PC-9 (cell line): ENCODE measurements at regions of chr7 and their contacts with region 1.

Region 1: GRCh38 chr7:82699773-82700186 is 256.2 kb upstream of the CACNA2D1 start:
- DNase-seq: peak; percentile 69 to 89
- H3K4me3 ChIP-seq: no peak overlapping the region
- H3K27ac ChIP-seq: peak overlapping the region; percentile 28; the same call in 1 of the 2 replicates
- H3K4me1 ChIP-seq: peaks cover 21% of the 10 kb centered on the region
- H3K27me3 ChIP-seq: no peaks in the 10 kb centered on the region
- CTCF ChIP-seq: no peak

Region 2: DNA sequence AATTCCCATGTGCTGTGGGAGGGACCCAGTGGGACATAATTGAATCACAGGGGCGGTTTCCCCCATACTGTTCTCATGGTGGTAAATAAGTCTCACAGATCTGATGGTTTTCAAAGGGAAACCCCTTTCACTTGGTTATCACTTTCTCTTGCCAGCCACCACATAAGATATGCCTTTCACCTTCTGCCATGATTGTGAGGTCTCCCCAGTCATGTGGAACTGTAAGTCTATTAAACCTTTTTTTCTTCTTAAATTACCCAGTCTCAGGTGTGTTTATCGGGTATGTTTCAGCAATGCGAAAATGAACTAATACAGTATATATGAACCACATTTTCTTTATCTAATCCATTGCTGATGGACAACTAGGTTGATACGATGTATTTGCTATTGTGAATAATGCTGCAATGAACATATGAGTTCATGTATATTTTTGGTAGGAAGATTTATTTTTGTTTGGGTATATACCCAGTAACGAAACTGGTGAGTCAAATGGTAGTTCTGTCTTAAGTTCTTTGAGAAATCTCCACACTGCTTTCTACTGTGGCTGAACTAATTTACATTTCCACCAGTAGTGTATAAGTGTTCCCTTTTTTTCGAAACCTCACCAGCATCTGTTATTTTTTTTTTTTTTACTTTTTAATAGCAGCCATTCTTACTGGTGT is 859.9 kb before region 1 on chr7:
- CTCF ChIA-PET with region 1: no interaction called
- POLR2A ChIA-PET with region 1: interaction called, 27 read pairs
- intact Hi-C with region 1: no loop called
- DNase-seq: no peak
- H3K4me3 ChIP-seq: no peak overlapping the region
- H3K27ac ChIP-seq: no peak overlapping the region
- H3K4me1 ChIP-seq: no peaks in the 10 kb centered on the region
- H3K27me3 ChIP-seq: no peaks in the 10 kb centered on the region
- CTCF ChIP-seq: no peak

Region 3: GRCh38 chr7:82388138-82388537 is 311.6 kb before region 1 on chr7:
- CTCF ChIA-PET with region 1: no interaction called
- POLR2A ChIA-PET with region 1: interaction called, 10 read pairs
- intact Hi-C with region 1: no loop called
- DNase-seq: no peak
- H3K4me3 ChIP-seq: no peak overlapping the region
- H3K27ac ChIP-seq: no peak overlapping the region
- H3K4me1 ChIP-seq: no peaks in the 10 kb centered on the region
- H3K27me3 ChIP-seq: no peaks in the 10 kb centered on the region
- CTCF ChIP-seq: no peak

Region 4: DNA sequence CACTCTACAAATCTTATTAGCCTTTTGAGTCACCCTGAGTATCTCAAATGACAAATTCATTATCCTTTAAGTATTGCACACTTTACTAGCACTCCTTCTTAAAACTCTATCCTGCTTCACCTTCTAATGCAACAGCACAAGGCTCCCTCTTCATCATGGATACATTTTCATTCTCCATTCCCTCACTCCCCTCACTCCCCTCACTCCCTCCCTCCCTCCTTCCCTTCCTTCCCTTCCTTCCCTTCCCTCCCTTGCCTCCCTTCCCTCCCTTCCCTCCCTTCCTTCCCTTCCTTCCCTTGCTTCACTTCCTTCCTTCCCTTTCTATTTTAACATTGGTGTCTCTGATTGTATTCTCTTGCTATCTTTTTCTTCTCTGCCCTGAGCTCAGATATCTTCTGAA is 332.4 kb after region 1 on chr7:
- CTCF ChIA-PET with region 1: no interaction called
- POLR2A ChIA-PET with region 1: no interaction called
- intact Hi-C with region 1: no loop called
- DNase-seq: no peak
- H3K4me3 ChIP-seq: no peak overlapping the region
- H3K27ac ChIP-seq: no peak overlapping the region
- H3K4me1 ChIP-seq: no peaks in the 10 kb centered on the region
- H3K27me3 ChIP-seq: no peaks in the 10 kb centered on the region
- CTCF ChIP-seq: no peak